ENCODE measurements at regions of chr7 and their contacts with region 1.

Region 1: GRCh38 chr7:71325151-71325550 is 193.2 kb downstream of the GALNT17 start:
- DNase-seq: no peak
- ATAC-seq: no peak
- H3K4me3 ChIP-seq: no peak overlapping the region
- H3K27ac ChIP-seq: no peak overlapping the region
- H3K4me1 ChIP-seq: peaks cover 0 to 25% (median 5%) of the 10 kb centered on the region in 12 donors
- H3K27me3 ChIP-seq: no peaks in the 10 kb centered on the region
- CTCF ChIP-seq: no peak
- POLR2A ChIP-seq: no peak

Region 2: GRCh38 chr7:71255537-71256178 is 69.5 kb before region 1 on chr7:
- intact Hi-C with region 1: no loop called
- DNase-seq: no peak
- ATAC-seq: no peak
- H3K4me3 ChIP-seq: no peak overlapping the region
- H3K27ac ChIP-seq: no peak overlapping the region
- H3K4me1 ChIP-seq: peaks cover 0 to 11% (median 0%) of the 10 kb centered on the region in 12 donors
- H3K27me3 ChIP-seq: no peaks in the 10 kb centered on the region
- CTCF ChIP-seq: no peak
- POLR2A ChIP-seq: no peak

Region 3: GRCh38 chr7:71272509-71273490 is 52.4 kb before region 1 on chr7:
- intact Hi-C with region 1: loop called in 1 of 10 experiments (anchors 10 kb)
- DNase-seq: peak in 2 of 5 donors; percentile 43 to 50
- ATAC-seq: peak in 3 of 4 donors; percentile 47 to 69 (median 55)
- H3K4me3 ChIP-seq: no peak overlapping the region
- H3K27ac ChIP-seq: peak overlapping the region in 10 of 12 donors; percentile 34 to 93 (median 75)
- H3K4me1 ChIP-seq: peaks cover 0 to 32% (median 11%) of the 10 kb centered on the region in 12 donors
- H3K27me3 ChIP-seq: no peaks in the 10 kb centered on the region
- CTCF ChIP-seq: peak in 1 of 12 donors; percentile 8
- POLR2A ChIP-seq: no peak

Region 4: DNA sequence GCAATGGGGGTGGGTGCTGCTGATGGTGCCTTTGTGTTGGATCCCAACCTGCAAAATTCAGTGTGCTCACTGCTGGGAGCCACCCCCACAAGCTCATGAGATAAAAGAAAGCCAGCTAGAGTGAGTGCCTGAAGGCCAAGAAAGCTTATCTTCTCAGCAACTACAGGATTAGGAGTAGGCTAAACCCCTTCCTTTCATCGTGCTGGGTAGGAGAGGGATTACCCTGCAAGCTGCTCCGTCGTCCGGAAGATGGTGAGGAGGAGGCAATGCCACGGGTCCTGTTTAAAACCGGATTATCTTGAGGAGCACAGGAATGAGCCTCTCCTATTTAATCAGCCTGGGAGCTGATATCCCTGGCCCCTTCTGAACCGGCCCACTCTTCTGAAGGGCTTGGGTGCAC is 64.8 kb after region 1 on chr7:
- intact Hi-C with region 1: no loop called
- DNase-seq: no peak
- ATAC-seq: no peak
- H3K4me3 ChIP-seq: no peak overlapping the region
- H3K27ac ChIP-seq: no peak overlapping the region
- H3K4me1 ChIP-seq: peaks cover 0 to 6% (median 0%) of the 10 kb centered on the region in 12 donors
- H3K27me3 ChIP-seq: no peaks in the 10 kb centered on the region
- CTCF ChIP-seq: no peak
- POLR2A ChIP-seq: no peak

Measured in heart left ventricle (tissue), 16 donors.